Mammary epithelial cell (primary cell): ENCODE measurements at regions of chr1 and their contacts with region 1.

Region 1: GRCh38 chr1:10032590-10033358 is at the start of gene UBE4B:
- DNase-seq: peak; percentile 98
- H3K4me3 ChIP-seq: peak within 1 kb of the TSS; percentile 79 to 99 (median 90)
- H3K27ac ChIP-seq: peak within 1 kb of the TSS; percentile 85
- H3K4me1 ChIP-seq: peaks cover 3% of the 10 kb centered on the region
- H3K27me3 ChIP-seq: no peaks in the 10 kb centered on the region
- CTCF ChIP-seq: peak; percentile 62 to 90
- total RNA-seq, gene UBE4B: 34.7 to 47.2 TPM

Region 2: GRCh38 chr1:9784508-9785133 is 248.2 kb before region 1 on chr1:
- CTCF ChIA-PET with region 1: no interaction called
- dilution Hi-C with region 1: no loop called
- in situ Hi-C with region 1: no loop called
- intact Hi-C with region 1: loop called (anchors 10 kb)
- DNase-seq: peak; percentile 52
- H3K4me3 ChIP-seq: no peak overlapping the region
- H3K27ac ChIP-seq: no peak overlapping the region
- H3K4me1 ChIP-seq: peaks cover 12% of the 10 kb centered on the region
- H3K27me3 ChIP-seq: no peaks in the 10 kb centered on the region
- CTCF ChIP-seq: peak; percentile 79 to 84

Region 3: GRCh38 chr1:9807541-9807940 is 225.2 kb before region 1 on chr1:
- CTCF ChIA-PET with region 1: no interaction called
- dilution Hi-C with region 1: no loop called
- in situ Hi-C with region 1: no loop called
- intact Hi-C with region 1: no loop called
- DNase-seq: no peak
- H3K4me3 ChIP-seq: no peak overlapping the region
- H3K27ac ChIP-seq: no peak overlapping the region
- H3K4me1 ChIP-seq: peaks cover 16% of the 10 kb centered on the region
- H3K27me3 ChIP-seq: no peaks in the 10 kb centered on the region
- CTCF ChIP-seq: no peak

Region 4: GRCh38 chr1:9942939-9943788 is 89.6 kb before region 1 on chr1 and contains the starts of genes LZIC and NMNAT1:
- CTCF ChIA-PET with region 1: no interaction called
- dilution Hi-C with region 1: no loop called
- in situ Hi-C with region 1: loop called in 1 of 2 experiments (anchors 5 kb)
- intact Hi-C with region 1: loop called (anchors 1 kb)
- DNase-seq: peak; percentile 95
- H3K4me3 ChIP-seq: peak within 1 kb of the TSS; percentile 66 to 77 (median 67)
- H3K27ac ChIP-seq: peak within 1 kb of the TSS; percentile 95
- H3K4me1 ChIP-seq: peaks cover 5% of the 10 kb centered on the region
- H3K27me3 ChIP-seq: no peaks in the 10 kb centered on the region
- CTCF ChIP-seq: no peak
- total RNA-seq, gene LZIC: 19.8 to 30.6 TPM
- total RNA-seq, gene NMNAT1: 9.7 to 11.1 TPM

Region 5: DNA sequence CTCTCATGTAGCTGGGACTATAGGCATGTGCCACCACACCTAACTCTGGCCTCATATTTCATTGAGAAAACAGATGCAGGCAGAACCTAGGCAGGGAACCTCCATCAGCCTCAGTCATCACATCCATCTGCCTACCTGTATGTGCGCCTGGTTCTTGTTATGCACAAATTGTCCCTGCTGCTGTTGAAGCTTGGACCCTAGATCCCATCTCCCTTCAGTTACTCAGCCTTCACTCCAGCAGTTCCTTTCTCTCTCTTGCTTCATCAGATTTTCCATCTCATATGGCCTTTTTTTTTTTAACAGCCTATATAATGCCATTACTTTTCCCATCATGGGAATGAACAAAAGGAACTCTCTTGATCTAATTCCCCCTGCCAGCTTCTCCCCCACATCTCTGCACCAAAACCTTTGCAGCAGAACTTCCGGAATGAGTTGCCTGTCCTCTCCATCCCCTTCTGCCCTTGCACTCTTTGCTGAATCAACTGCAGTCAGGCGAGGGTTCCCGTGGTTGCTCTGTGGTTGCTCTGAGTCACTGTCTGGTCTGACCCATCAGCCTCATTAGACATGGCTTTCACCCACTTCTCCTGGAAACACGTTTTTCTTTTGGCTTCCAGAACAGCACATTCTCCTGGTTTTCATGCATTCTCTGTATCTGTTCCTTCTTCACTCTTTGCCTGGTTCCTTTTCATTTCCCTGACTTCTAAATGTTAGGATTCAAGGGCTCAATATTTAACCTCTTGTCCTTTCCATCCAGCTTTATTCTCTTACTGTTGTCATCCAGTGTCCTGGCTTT is 41.5 kb after region 1 on chr1:
- CTCF ChIA-PET with region 1: no interaction called
- dilution Hi-C with region 1: no loop called
- in situ Hi-C with region 1: no loop called
- intact Hi-C with region 1: loop called (anchors 2 kb)
- DNase-seq: peak; percentile 96
- H3K4me3 ChIP-seq: no peak overlapping the region
- H3K27ac ChIP-seq: peak overlapping the region; percentile 62
- H3K4me1 ChIP-seq: peaks cover 32% of the 10 kb centered on the region
- H3K27me3 ChIP-seq: no peaks in the 10 kb centered on the region
- CTCF ChIP-seq: no peak

Region 6: GRCh38 chr1:10128101-10128765 is 95.5 kb after region 1 on chr1:
- CTCF ChIA-PET with region 1: no interaction called
- dilution Hi-C with region 1: no loop called
- in situ Hi-C with region 1: no loop called
- intact Hi-C with region 1: loop called (anchors 5 kb)
- DNase-seq: no peak
- H3K4me3 ChIP-seq: no peak overlapping the region
- H3K27ac ChIP-seq: no peak overlapping the region
- H3K4me1 ChIP-seq: no peaks in the 10 kb centered on the region
- H3K27me3 ChIP-seq: no peaks in the 10 kb centered on the region
- CTCF ChIP-seq: no peak

Region 7: DNA sequence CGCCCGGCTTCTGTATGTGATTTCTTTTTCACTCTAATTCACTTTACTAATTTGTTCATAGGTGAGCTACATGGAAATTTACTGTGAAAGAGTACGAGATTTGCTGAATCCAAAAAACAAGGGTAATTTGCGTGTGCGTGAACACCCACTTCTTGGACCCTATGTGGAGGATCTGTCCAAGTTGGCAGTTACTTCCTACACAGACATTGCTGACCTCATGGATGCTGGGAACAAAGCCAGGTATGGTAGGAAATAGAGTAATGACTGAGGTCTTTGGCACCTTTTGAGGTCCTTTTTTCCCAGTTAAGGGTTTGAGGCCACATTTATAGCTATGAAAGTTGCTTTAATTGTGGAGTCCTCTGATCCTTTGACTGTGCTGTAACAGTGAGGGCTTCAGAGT is 234.5 kb after region 1 on chr1:
- CTCF ChIA-PET with region 1: no interaction called
- dilution Hi-C with region 1: no loop called
- in situ Hi-C with region 1: no loop called
- intact Hi-C with region 1: no loop called
- DNase-seq: no peak
- H3K4me3 ChIP-seq: no peak overlapping the region
- H3K27ac ChIP-seq: no peak overlapping the region
- H3K4me1 ChIP-seq: no peaks in the 10 kb centered on the region
- H3K27me3 ChIP-seq: no peaks in the 10 kb centered on the region
- CTCF ChIP-seq: no peak

Region 8: GRCh38 chr1:10338047-10338446 is 305.3 kb after region 1 on chr1:
- CTCF ChIA-PET with region 1: no interaction called
- dilution Hi-C with region 1: no loop called
- in situ Hi-C with region 1: no loop called
- intact Hi-C with region 1: loop called (anchors 10 kb)
- DNase-seq: no peak
- H3K4me3 ChIP-seq: no peak overlapping the region
- H3K27ac ChIP-seq: no peak overlapping the region
- H3K4me1 ChIP-seq: no peaks in the 10 kb centered on the region
- H3K27me3 ChIP-seq: no peaks in the 10 kb centered on the region
- CTCF ChIP-seq: peak; percentile 66 to 68